Activated naive CD4-positive, alpha-beta T cell treated with anti-CD3 and anti-CD28 coated beads for 36 hours (primary cell): ENCODE measurements at regions of chr3 and their contacts with region 1.

Region 1: GRCh38 chr3:186754006-186754405 is 29.4 kb upstream of the EIF4A2 start:
- DNase-seq: no peak
- H3K4me3 Mint-ChIP-seq: no peak overlapping the region
- H3K27ac Mint-ChIP-seq: no peak overlapping the region
- H3K4me1 Mint-ChIP-seq: peaks cover 12% of the 10 kb centered on the region
- H3K27me3 Mint-ChIP-seq: no peaks in the 10 kb centered on the region

Region 2: DNA sequence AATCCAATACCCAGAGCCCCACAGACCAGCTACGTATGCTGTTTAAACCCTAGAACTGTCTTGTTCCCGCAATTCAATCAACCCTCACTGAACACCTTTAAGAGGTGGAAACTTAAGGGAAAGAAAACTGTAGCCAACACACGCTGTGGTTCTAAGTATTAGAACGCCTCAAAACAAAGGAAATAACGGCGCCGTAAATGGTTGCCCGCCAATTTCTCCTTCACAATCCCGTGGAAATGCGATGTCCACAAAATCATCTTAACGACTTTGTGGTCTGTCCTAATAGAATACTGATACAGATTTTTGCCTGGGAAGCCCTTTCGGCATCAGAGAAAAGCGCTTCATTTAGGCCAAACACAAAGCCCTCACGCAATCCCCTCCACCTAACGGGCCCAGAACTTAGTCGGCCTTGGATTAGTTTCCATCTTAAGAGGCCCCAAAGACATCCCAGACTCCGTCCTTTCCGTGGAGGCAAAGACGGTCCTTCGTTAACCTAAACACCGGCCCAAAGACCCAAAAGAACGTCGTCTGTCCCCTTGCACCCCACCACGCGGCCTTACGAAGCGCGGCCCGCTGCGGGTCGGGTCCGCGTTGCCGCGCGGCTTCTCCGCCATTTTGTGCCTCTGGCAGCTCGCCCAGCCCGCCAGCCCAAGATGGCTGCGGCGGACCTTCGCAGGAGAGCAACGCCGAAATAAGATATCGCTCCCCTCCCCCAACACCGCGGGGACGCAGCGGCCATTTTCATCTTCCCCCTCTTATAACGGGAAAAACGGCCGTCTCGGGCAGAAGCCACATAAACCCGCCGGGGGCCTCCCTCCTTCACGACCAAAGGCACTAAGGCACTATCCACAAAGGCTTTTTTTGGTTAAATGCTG is 817.0 kb before region 1 on chr3:
- CTCF ChIA-PET with region 1: no interaction called
- intact Hi-C with region 1: no loop called
- DNase-seq: peak; percentile 90
- H3K4me3 Mint-ChIP-seq: peak overlapping the region; percentile 100
- H3K27ac Mint-ChIP-seq: peak overlapping the region; percentile 100
- H3K4me1 Mint-ChIP-seq: peaks cover 24% of the 10 kb centered on the region
- H3K27me3 Mint-ChIP-seq: no peaks in the 10 kb centered on the region

Region 3: GRCh38 chr3:186514296-186515002 is 239.6 kb before region 1 on chr3:
- CTCF ChIA-PET with region 1: no interaction called
- intact Hi-C with region 1: loop called (anchors 1 kb)
- DNase-seq: peak; percentile 71
- H3K4me3 Mint-ChIP-seq: no peak overlapping the region
- H3K27ac Mint-ChIP-seq: peak overlapping the region; percentile 78
- H3K4me1 Mint-ChIP-seq: peaks cover 79% of the 10 kb centered on the region
- H3K27me3 Mint-ChIP-seq: no peaks in the 10 kb centered on the region

Region 4: DNA sequence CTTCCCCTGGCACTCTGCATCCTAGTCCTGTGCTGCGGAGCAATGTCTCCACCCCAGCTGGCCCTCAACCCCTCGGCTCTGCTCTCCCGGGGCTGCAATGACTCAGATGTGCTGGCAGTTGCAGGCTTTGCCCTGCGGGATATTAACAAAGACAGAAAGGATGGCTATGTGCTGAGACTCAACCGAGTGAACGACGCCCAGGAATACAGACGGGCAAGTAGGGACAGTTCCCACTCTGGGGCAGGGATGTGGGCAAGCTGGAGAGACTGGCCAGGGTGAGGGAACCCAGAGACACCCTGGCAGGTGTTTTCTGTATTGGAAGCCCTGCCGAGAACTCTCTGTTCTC is 113.6 kb before region 1 on chr3:
- CTCF ChIA-PET with region 1: no interaction called
- intact Hi-C with region 1: loop called (anchors 1 kb)
- DNase-seq: no peak
- H3K4me3 Mint-ChIP-seq: no peak overlapping the region
- H3K27ac Mint-ChIP-seq: no peak overlapping the region
- H3K4me1 Mint-ChIP-seq: peaks cover 24% of the 10 kb centered on the region
- H3K27me3 Mint-ChIP-seq: peaks cover 6% of the 10 kb centered on the region

Region 5: DNA sequence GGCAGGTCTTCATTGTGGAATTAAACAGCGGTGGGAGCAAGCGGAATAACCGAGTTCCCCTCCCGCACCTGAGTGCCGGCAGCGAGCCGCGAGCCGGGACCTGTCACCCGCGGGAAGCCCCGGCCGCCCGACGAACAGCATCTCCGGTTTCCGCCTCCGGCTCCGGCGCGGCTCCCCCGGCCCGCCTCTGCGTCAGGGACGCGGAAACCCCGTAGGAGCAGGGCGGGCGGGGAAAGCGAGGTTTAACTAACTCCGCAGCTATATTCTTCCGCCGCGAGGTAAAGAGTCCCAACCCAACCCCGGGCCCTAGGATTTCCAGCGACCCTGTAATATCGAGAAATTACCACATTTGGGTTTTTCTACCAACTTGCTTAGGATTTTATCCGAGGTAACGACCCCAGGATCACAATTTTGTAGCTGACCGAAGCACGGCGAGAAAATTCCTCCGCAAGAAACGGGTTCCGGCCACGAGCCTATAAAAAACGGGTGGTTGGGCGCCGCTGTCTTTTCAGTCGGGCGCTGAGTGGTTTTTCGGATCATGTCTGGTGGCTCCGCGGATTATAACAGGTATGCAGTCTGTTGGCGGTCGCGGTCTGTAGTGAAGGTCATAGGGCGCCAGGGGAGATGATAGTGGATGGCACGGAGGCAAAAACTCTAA is 29.2 kb after region 1 on chr3 and contains the start of gene EIF4A2:
- CTCF ChIA-PET with region 1: interaction called, 4 read pairs
- intact Hi-C with region 1: loop called (anchors 1 kb)
- DNase-seq: peak; percentile 91
- H3K4me3 Mint-ChIP-seq: peak within 1 kb of the TSS; percentile 99
- H3K27ac Mint-ChIP-seq: peak within 1 kb of the TSS; percentile 100
- H3K4me1 Mint-ChIP-seq: peaks cover 29% of the 10 kb centered on the region
- H3K27me3 Mint-ChIP-seq: peaks cover 3% of the 10 kb centered on the region
- total RNA-seq, gene EIF4A2: 445 to 469 TPM

Region 6: DNA sequence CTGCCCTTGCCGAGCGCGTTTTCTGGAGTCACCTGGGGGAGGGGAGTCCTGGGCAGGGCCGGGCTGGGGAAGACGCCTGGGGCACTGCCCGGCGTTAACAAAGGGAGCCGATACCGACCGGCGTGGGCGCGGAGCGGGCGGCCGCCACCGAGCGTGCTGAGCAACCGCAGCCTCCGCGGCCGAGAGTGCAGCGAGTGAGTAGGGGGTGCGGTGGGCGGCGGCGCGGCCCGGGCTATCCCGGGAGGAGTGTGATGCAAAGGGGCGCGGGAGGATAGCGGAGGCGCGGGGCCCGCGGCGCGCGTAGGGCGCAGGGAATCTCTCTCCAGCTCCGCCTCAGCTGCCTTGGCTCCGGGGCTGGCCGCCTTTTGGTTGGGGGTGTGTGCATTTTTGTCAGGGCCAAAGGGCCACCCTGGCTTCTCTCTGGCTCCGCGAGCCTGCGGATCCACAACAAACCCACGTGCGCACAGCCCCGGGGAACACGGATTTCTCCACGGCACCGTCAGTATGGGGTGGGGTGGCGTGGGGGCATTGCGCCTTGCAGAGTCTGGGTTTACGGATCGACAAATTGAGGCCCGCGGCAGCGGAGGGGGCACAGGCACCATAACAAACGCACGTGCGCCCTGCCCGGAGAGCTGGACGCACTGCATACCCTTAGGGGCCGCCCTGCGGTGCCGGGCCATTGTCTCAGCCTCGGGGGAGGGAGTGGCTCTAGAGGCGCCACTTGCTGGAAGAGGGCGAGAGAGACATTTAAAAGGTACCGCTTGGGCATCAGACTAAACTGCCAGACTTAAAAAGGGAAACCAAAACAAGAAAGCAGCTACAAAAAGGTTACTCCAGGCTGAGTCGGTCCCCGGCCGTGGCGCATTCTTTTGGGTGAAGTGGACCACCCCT is 176.9 kb after region 1 on chr3:
- CTCF ChIA-PET with region 1: no interaction called
- intact Hi-C with region 1: no loop called
- DNase-seq: peak; percentile 74
- H3K4me3 Mint-ChIP-seq: peak overlapping the region; percentile 83
- H3K27ac Mint-ChIP-seq: peak overlapping the region; percentile 85
- H3K4me1 Mint-ChIP-seq: peaks cover 22% of the 10 kb centered on the region
- H3K27me3 Mint-ChIP-seq: no peaks in the 10 kb centered on the region

Region 7: DNA sequence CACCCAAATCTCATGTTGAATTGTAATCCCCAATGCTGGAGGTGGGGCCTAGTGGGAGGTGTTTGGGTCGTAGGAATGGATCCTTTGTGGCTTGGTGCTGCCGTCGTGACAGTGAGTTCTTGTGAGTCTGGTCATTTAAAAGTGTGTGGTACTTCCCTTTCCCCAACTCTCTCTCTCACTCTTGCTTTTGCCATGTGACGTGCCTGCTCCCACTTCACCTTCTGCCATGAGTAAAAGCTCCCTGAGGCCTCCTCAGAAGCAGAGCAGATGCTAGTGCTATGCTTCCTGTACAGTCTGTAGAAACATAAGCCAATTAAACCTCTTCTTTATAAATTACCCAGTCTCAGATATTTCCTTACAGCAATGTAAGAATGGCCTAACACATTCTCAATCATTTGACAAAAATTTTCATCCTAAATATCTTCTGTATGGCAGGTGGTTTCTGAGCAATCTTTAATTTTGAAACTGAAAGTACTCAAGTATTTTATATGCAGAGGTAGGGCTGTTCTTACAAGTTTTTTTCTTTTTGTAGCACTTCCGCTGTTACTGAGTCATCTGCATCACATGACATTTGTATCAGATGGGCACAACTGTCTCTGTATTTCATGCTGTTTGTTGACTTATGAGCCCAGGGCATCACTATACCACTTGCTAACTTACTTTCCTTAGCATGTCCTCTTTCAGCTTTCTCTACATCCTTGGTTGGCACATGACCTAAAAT is 376.5 kb after region 1 on chr3:
- CTCF ChIA-PET with region 1: no interaction called
- intact Hi-C with region 1: loop called (anchors 1 kb)
- DNase-seq: peak; percentile 64
- H3K4me3 Mint-ChIP-seq: peak overlapping the region; percentile 42
- H3K27ac Mint-ChIP-seq: peak overlapping the region; percentile 98
- H3K4me1 Mint-ChIP-seq: peaks cover 40% of the 10 kb centered on the region
- H3K27me3 Mint-ChIP-seq: no peaks in the 10 kb centered on the region